ENCODE measurements at regions of chr12 and their contacts with region 1.

Region 1: GRCh38 chr12:120469450-120470149 is at the start of gene SRSF9:
- DNase-seq: peak; percentile 97 to 98 (median 97)
- H3K4me3 ChIP-seq: peak within 1 kb of the TSS; percentile 75 to 84
- H3K4me3 Mint-ChIP-seq: peak within 1 kb of the TSS; percentile 87 to 94 (median 91)
- H3K27ac ChIP-seq: peak within 1 kb of the TSS; percentile 79
- H3K27ac Mint-ChIP-seq: peak within 1 kb of the TSS; percentile 89 to 97 (median 92)
- H3K4me1 ChIP-seq: peaks cover 40% of the 10 kb centered on the region
- H3K4me1 Mint-ChIP-seq: peaks cover 10 to 62% (median 35%) of the 10 kb centered on the region in 4 donors
- H3K27me3 ChIP-seq: no peaks in the 10 kb centered on the region
- H3K27me3 Mint-ChIP-seq: no peaks in the 10 kb centered on the region
- total RNA-seq, gene SRSF9: 139 to 143 TPM

Region 2: DNA sequence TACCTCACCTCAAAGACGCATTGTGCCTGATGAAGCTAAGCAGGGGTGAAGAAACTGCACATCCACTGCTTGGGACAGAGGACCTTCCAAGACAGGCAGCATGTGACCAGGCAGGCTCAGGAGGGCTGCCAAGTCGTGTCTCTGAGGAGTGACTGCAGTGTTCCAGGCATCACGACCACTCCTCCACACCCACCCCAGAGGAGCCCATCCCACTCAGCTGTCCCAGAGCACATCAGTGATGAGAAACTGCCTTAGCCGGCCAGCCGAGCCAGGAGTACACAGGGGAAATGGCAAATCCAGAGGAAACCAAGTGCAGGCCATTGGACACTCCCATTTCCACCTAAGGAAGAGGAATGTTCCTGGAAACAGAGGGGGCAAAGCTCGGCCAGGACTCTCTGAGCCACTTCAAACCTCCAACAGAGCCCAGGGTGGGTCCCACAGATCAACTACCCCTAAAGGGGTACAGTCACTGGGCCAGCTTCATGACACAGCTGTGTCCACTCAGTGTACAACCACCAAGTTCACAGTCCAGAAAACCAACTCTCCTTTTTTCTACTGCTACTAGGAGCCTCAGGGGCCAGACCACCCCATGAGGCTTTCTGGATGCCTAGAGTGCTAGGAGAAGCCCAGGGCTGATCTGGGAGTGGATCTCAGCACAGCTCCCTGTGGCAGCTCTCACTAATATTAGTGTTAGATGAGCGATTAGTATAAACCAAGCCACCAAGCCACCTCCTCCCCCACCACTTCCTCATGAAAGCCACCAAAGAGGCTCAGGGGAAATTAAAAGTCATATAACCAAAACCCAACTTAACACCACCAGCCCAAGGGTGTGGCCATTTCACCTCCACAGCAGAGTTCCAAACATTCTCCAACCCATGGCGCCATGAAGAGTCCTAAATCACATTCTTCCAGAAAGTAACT is 219.5 kb before region 1 on chr12:
- CTCF ChIA-PET with region 1: no interaction called
- POLR2A ChIA-PET with region 1: no interaction called
- intact Hi-C with region 1: no loop called
- DNase-seq: peak; percentile 52 to 61 (median 59)
- H3K4me3 ChIP-seq: peak overlapping the region; percentile 4 to 49
- H3K4me3 Mint-ChIP-seq: peak overlapping the region; percentile 65 to 91 (median 82)
- H3K27ac ChIP-seq: peak overlapping the region; percentile 50
- H3K27ac Mint-ChIP-seq: peak overlapping the region; percentile 81 to 99 (median 95)
- H3K4me1 ChIP-seq: peaks cover 90% of the 10 kb centered on the region
- H3K4me1 Mint-ChIP-seq: peaks cover 67 to 88% (median 78%) of the 10 kb centered on the region in 4 donors
- H3K27me3 ChIP-seq: no peaks in the 10 kb centered on the region
- H3K27me3 Mint-ChIP-seq: no peaks in the 10 kb centered on the region

Region 3: GRCh38 chr12:120265473-120266179 is 204.0 kb before region 1 on chr12 and contains the start of gene PXN:
- CTCF ChIA-PET with region 1: no interaction called
- POLR2A ChIA-PET with region 1: no interaction called
- intact Hi-C with region 1: no loop called
- DNase-seq: peak; percentile 84 to 93 (median 89)
- H3K4me3 ChIP-seq: peak within 1 kb of the TSS; percentile 59 to 85
- H3K4me3 Mint-ChIP-seq: peak within 1 kb of the TSS; percentile 89 to 100 (median 94)
- H3K27ac ChIP-seq: peak within 1 kb of the TSS; percentile 81
- H3K27ac Mint-ChIP-seq: peak within 1 kb of the TSS; percentile 92 to 98 (median 96)
- H3K4me1 ChIP-seq: peaks cover 44% of the 10 kb centered on the region
- H3K4me1 Mint-ChIP-seq: peaks cover 24 to 51% (median 37%) of the 10 kb centered on the region in 4 donors
- H3K27me3 ChIP-seq: no peaks in the 10 kb centered on the region
- H3K27me3 Mint-ChIP-seq: no peaks in the 10 kb centered on the region
- total RNA-seq, gene PXN: 108 to 126 TPM

Region 4: GRCh38 chr12:120317224-120318105 is 152.1 kb before region 1 on chr12:
- CTCF ChIA-PET with region 1: interaction called, 3 read pairs
- POLR2A ChIA-PET with region 1: interaction called, 5 read pairs
- intact Hi-C with region 1: loop called (anchors 1 kb)
- DNase-seq: peak; percentile 100
- H3K4me3 ChIP-seq: peak overlapping the region; percentile 42 to 65
- H3K4me3 Mint-ChIP-seq: peak overlapping the region; percentile 87 to 95 (median 92)
- H3K27ac ChIP-seq: peak overlapping the region; percentile 81
- H3K27ac Mint-ChIP-seq: peak overlapping the region; percentile 90 to 99 (median 98)
- H3K4me1 ChIP-seq: peaks cover 10% of the 10 kb centered on the region
- H3K4me1 Mint-ChIP-seq: peaks cover 11 to 16% (median 14%) of the 10 kb centered on the region in 4 donors
- H3K27me3 ChIP-seq: no peaks in the 10 kb centered on the region
- H3K27me3 Mint-ChIP-seq: no peaks in the 10 kb centered on the region

Region 5: DNA sequence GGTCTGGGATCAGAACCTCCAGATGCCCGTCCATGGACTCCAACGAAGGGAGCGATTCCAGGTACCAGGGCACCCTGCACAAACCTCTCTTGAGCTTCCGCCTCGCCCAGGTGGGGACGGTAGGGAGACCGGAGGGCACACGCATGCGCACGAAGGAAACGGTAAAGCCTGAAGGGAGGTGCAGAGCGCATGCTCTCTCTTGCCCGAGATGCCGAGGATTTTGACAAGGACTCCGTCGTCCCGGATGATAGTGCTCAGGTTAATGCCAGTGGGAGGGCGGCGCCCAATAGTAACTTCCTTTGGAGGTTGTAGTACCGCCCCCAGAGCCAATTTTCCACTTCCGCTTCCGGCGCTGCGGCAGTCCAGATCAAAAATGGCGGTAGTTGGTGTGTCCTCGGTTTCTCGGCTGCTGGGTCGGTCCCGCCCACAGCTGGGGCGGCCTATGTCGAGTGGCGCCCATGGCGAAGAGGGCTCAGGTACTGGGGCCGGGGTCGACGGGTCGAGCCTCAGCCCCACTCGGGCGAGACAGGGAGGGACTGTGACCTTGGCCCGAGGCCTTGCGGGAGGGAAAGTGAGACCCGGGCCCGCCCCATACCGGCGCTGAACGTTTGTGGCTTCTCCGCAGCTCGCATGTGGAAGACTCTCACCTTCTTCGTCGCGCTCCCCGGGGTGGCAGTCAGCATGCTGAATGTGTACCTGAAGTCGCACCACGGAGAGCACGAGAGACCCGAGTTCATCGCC is 31.7 kb before region 1 on chr12 and contains the start of gene COX6A1:
- CTCF ChIA-PET with region 1: interaction called, 187 read pairs
- POLR2A ChIA-PET with region 1: interaction called, 32 read pairs
- intact Hi-C with region 1: loop called (anchors 1 kb)
- DNase-seq: peak; percentile 94 to 99 (median 98)
- H3K4me3 ChIP-seq: peak within 1 kb of the TSS; percentile 52 to 70
- H3K4me3 Mint-ChIP-seq: peak within 1 kb of the TSS; percentile 92 to 99 (median 96)
- H3K27ac ChIP-seq: peak within 1 kb of the TSS; percentile 76
- H3K27ac Mint-ChIP-seq: peak within 1 kb of the TSS; percentile 86 to 99 (median 96)
- H3K4me1 ChIP-seq: peaks cover 26% of the 10 kb centered on the region
- H3K4me1 Mint-ChIP-seq: peaks cover 18 to 31% (median 27%) of the 10 kb centered on the region in 4 donors
- H3K27me3 ChIP-seq: no peaks in the 10 kb centered on the region
- H3K27me3 Mint-ChIP-seq: peaks cover under 1 to 3% of the 10 kb centered on the region in 2 donors
- total RNA-seq, gene COX6A1: 144 to 158 TPM

Region 6: DNA sequence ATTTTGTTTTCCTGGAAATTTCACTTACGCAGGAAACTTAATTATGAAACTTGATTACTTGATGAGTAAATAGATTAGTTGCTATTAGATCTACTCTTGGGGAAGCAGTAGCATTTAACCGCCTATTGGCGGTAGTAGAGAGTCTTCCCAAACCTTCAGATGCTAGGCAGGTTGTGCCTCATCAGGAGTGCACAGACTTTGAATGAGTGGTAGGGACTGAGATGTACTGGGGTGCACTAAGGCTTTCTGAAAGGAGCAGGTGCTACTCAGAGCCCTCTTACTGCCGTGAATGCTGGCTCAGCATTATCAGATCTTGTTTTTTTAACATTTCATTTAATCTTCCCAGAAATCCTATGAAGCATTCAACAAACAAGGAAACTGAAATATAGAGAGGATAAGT is 15.6 kb before region 1 on chr12:
- CTCF ChIA-PET with region 1: interaction called, 187 read pairs
- POLR2A ChIA-PET with region 1: interaction called, 28 read pairs
- intact Hi-C with region 1: no loop called
- DNase-seq: peak; percentile 33 to 46 (median 37)
- H3K4me3 ChIP-seq: no peak overlapping the region
- H3K4me3 Mint-ChIP-seq: no peak overlapping the region
- H3K27ac ChIP-seq: no peak overlapping the region
- H3K27ac Mint-ChIP-seq: peak overlapping the region in 3 of 7 donors; percentile 5 to 65 (median 55)
- H3K4me1 ChIP-seq: peaks cover 13% of the 10 kb centered on the region
- H3K4me1 Mint-ChIP-seq: peaks cover 0 to 17% (median 8%) of the 10 kb centered on the region in 4 donors
- H3K27me3 ChIP-seq: no peaks in the 10 kb centered on the region
- H3K27me3 Mint-ChIP-seq: no peaks in the 10 kb centered on the region

Region 7: GRCh38 chr12:120495723-120496412 is 26.3 kb after region 1 on chr12 and contains the start of gene DYNLL1:
- CTCF ChIA-PET with region 1: interaction called, 26 read pairs
- POLR2A ChIA-PET with region 1: interaction called, 42 read pairs
- intact Hi-C with region 1: loop called (anchors 1 kb)
- DNase-seq: peak; percentile 96 to 98 (median 97)
- H3K4me3 ChIP-seq: peak within 1 kb of the TSS; percentile 93 to 94
- H3K4me3 Mint-ChIP-seq: peak within 1 kb of the TSS; percentile 91 to 98 (median 94)
- H3K27ac ChIP-seq: peak within 1 kb of the TSS; percentile 82
- H3K27ac Mint-ChIP-seq: peak within 1 kb of the TSS; percentile 89 to 96 (median 94)
- H3K4me1 ChIP-seq: peaks cover 19% of the 10 kb centered on the region
- H3K4me1 Mint-ChIP-seq: peaks cover 22 to 49% (median 37%) of the 10 kb centered on the region in 4 donors
- H3K27me3 ChIP-seq: no peaks in the 10 kb centered on the region
- H3K27me3 Mint-ChIP-seq: no peaks in the 10 kb centered on the region
- total RNA-seq, gene DYNLL1: 97.5 to 108 TPM

Region 8: GRCh38 chr12:120534203-120534702 is 64.7 kb after region 1 on chr12 and contains the start of gene RNF10:
- CTCF ChIA-PET with region 1: interaction called, 4 read pairs
- POLR2A ChIA-PET with region 1: interaction called, 11 read pairs
- intact Hi-C with region 1: loop called (anchors 2 kb)
- DNase-seq: peak; percentile 85 to 87 (median 86)
- H3K4me3 ChIP-seq: peak within 1 kb of the TSS; percentile 62 to 88
- H3K4me3 Mint-ChIP-seq: peak within 1 kb of the TSS; percentile 92 to 97 (median 94)
- H3K27ac ChIP-seq: peak within 1 kb of the TSS; percentile 94
- H3K27ac Mint-ChIP-seq: peak within 1 kb of the TSS; percentile 95 to 98 (median 96)
- H3K4me1 ChIP-seq: peaks cover 59% of the 10 kb centered on the region
- H3K4me1 Mint-ChIP-seq: peaks cover 43 to 68% (median 49%) of the 10 kb centered on the region in 4 donors
- H3K27me3 ChIP-seq: no peaks in the 10 kb centered on the region
- H3K27me3 Mint-ChIP-seq: no peaks in the 10 kb centered on the region
- total RNA-seq, gene RNF10: 244 to 249 TPM

Region 9: GRCh38 chr12:120686690-120687577 is 217.3 kb after region 1 on chr12 and contains the start of gene MLEC:
- CTCF ChIA-PET with region 1: no interaction called
- POLR2A ChIA-PET with region 1: no interaction called
- intact Hi-C with region 1: loop called (anchors 2 kb)
- DNase-seq: peak; percentile 99 to 100 (median 100)
- H3K4me3 ChIP-seq: peak within 1 kb of the TSS; percentile 85 to 98
- H3K4me3 Mint-ChIP-seq: peak within 1 kb of the TSS; percentile 90 to 96 (median 94)
- H3K27ac ChIP-seq: peak within 1 kb of the TSS; percentile 71
- H3K27ac Mint-ChIP-seq: peak within 1 kb of the TSS; percentile 92 to 97 (median 96)
- H3K4me1 ChIP-seq: peaks cover 41% of the 10 kb centered on the region
- H3K4me1 Mint-ChIP-seq: peaks cover 20 to 52% (median 36%) of the 10 kb centered on the region in 4 donors
- H3K27me3 ChIP-seq: no peaks in the 10 kb centered on the region
- H3K27me3 Mint-ChIP-seq: no peaks in the 10 kb centered on the region
- total RNA-seq, gene MLEC: 75.1 to 88.9 TPM